Gastrocnemius medialis (tissue), 4 donors: ENCODE measurements at regions of chr14 and their contacts with region 1.

Region 1: DNA sequence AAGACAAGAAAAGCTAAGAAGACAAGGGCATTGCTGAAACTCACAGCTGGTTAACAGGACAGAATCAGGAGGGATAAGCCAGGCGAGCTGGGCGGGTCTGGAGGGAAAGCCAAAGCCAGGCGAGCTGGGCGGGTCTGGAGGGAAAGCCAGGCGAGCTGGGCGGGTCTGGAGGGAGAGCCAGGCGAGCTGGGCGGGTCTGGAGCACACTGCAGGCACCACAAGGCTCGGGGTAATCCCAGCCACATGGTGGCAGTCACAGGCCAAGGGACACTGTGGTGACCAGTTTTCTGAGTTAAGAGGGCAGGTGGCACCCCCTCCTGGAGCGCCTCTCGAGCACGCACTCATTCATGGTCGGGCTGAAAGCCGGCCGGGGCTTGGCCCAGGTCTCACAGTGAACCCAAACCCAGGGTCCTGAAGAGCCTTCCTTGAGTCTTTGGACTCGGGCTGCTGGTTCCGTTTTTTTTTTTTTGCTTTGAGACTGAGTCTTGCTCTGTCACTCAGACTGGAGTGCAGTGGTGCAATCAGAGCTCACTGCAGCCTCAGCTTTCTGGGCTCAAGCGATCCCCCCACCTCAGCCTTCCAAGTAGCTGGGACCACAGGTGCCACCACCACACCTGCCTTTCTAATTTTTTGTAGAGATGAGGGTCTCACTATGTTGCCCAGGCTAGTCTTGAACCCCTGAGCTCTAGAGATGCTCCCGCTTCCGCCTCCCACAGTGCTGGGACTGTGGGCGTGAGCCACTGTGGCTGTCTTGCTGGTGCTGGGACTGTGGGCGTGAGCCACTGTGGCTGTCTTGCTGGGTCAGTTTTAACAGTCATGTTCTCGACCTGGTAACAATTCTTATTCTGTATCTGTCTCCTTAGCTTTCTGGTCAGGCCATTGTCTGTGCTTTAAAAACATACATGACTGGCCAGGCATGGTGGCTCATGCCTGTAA is 40.2 kb downstream of the HSP90AA1 start:
- DNase-seq: peak; percentile 79 to 93
- ATAC-seq: peak; percentile 54 to 87
- H3K4me3 ChIP-seq: no peak overlapping the region
- H3K27ac ChIP-seq: peak overlapping the region; percentile 58 to 77 (median 70)
- H3K4me1 ChIP-seq: peaks cover 36% of the 10 kb centered on the region in 2 donors
- H3K27me3 ChIP-seq: no peaks in the 10 kb centered on the region
- CTCF ChIP-seq: peak; percentile 43 to 69 (median 56)
- POLR2A ChIP-seq: no peak

Region 2: DNA sequence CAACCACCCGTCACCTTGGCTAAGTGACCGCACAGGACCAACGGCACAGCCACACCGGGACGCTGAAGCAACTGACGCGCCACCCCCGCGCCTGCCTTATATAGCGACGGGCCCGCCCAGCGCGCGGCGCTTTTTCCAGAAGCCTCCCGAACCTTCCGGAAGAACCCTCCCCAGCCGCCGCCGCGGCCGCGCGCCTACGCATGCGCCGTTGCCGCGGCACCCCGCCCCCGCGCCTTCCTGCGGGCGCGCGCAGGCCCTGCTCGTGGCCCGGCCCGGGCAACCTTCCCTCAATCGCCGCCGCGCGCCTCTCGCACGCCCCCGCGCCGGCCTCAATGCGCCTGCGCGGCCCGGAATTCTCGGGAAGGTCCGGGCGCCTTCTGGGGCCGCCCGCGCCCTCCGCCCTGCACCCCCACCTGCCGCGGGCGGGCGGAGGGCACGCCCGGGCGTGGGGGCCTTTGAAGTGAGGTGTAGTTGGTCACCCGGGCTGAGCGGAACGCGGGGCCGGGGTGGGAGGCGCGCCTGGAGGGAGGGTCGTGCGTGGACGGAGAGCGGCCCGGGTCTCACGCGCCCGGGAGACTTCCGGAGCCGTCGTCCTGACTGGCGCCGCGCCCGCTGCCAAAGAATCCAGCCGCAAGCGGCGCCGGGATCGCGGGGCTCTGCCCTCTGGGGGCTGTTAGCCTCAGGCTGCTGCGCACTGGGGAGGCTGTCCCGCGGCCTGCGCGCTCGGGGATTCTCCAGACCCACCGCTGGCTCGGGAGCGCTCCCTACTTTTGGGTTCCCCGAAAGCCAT is 40.6 kb after region 1 on chr14 and contains the start of gene HSP90AA1:
- in situ Hi-C with region 1: loop called in 3 of 4 experiments (anchors 10 kb)
- intact Hi-C with region 1: loop called (anchors 2 kb)
- DNase-seq: peak; percentile 84 to 93
- ATAC-seq: peak; percentile 88 to 90
- H3K4me3 ChIP-seq: peak within 1 kb of the TSS; percentile 72 to 93 (median 90)
- H3K27ac ChIP-seq: peak within 1 kb of the TSS; percentile 96 to 99 (median 99)
- H3K4me1 ChIP-seq: peaks cover 26 to 43% of the 10 kb centered on the region in 2 donors
- H3K27me3 ChIP-seq: no peaks in the 10 kb centered on the region
- CTCF ChIP-seq: peak in 2 of 5 experiments; percentile 25 to 32
- POLR2A ChIP-seq: peak; percentile 97 to 99
- total RNA-seq, gene HSP90AA1: 227 to 609 (median 488) TPM

Region 3: GRCh38 chr14:102096214-102097114 is 49.9 kb after region 1 on chr14:
- in situ Hi-C with region 1: loop called (anchors 5 to 10 kb)
- intact Hi-C with region 1: loop called (anchors 1 kb)
- DNase-seq: peak; percentile 72 to 75
- ATAC-seq: peak; percentile 89
- H3K4me3 ChIP-seq: no peak overlapping the region
- H3K27ac ChIP-seq: peak overlapping the region in 1 of 4 donors; percentile 16
- H3K4me1 ChIP-seq: peaks cover 7% of the 10 kb centered on the region in 2 donors
- H3K27me3 ChIP-seq: no peaks in the 10 kb centered on the region
- CTCF ChIP-seq: peak; percentile 73 to 87 (median 77)
- POLR2A ChIP-seq: no peak